GM12878 (cell line): ENCODE measurements at regions of chr17 and their contacts with region 1.

Region 1: GRCh38 chr17:57892146-57892828 is 42.4 kb upstream of the MRPS23 start:
- DNase-seq: no peak
- ATAC-seq: peak; percentile 91
- H3K4me3 ChIP-seq: no peak overlapping the region
- H3K27ac ChIP-seq: no peak overlapping the region
- H3K4me1 ChIP-seq: peaks cover 19% of the 10 kb centered on the region
- H3K27me3 ChIP-seq: no peaks in the 10 kb centered on the region
- CTCF ChIP-seq: peak; percentile 91 to 99 (median 99)
- EP300 ChIP-seq: no peak
- POLR2A ChIP-seq: no peak
- RAD21 ChIP-seq: peak; percentile 88

Region 2: GRCh38 chr17:57855391-57856035 is 36.8 kb before region 1 on chr17:
- CTCF ChIA-PET with region 1: interaction called, 47 read pairs
- POLR2A ChIA-PET with region 1: no interaction called
- RAD21 ChIA-PET with region 1: interaction called, 11 read pairs
- SMC1A ChIA-PET with region 1: interaction called, 7 read pairs
- in situ Hi-C with region 1: no loop called
- intact Hi-C with region 1: loop called (anchors 5 kb)
- DNase-seq: no peak
- ATAC-seq: no peak
- H3K4me3 ChIP-seq: no peak overlapping the region
- H3K27ac ChIP-seq: no peak overlapping the region
- H3K4me1 ChIP-seq: no peaks in the 10 kb centered on the region
- H3K27me3 ChIP-seq: no peaks in the 10 kb centered on the region; a peak in 1 of 4 replicates
- CTCF ChIP-seq: no peak
- EP300 ChIP-seq: no peak
- POLR2A ChIP-seq: no peak
- RAD21 ChIP-seq: no peak

Region 3: DNA sequence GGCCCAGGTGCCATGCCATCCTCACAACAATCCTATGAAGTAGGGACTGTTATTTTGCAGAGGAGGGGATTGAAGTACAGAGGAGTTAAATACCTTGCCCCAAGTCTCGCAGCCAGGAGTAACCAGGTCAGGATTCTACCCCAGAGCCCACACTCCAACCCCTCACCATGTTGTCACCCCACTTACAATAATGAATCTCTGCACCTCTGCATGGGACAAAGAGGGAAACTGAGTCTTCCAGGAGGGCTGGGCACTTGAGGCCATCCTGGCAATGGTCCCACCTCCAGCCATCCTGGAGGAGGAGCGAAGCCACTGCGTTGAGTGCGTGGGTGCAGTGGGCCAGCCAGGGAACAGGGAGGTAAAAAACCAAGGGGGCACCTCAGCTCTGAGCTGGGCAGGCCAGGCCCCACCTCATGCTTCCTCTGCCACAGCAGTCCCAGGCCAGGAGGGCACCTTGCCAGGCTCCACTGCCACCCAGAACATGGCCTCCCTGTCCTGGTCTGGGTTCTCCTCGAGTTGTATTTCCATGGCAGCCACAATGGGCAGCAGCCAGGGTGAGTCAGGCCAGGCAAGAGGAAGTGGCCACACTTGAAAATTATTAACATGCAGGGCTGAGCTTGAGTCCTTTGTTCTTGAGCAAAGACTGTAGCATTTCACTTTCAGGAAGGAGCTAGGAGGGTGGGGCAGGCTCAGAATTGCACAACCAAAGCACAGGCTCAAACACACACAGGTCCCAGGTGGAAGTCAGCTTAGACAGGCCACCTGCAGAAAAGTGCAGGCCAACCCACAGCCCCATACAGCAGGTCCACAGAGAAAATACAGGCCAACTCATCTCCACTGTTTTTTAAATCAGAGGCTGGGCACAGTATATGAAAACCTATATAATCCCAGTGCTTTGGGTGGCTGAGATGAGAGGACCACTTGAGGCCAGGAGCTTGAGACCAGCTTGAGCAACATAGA is 10.8 kb after region 1 on chr17:
- CTCF ChIA-PET with region 1: interaction called, 27 read pairs
- POLR2A ChIA-PET with region 1: interaction called, 4 read pairs
- RAD21 ChIA-PET with region 1: interaction called, 14 read pairs
- SMC1A ChIA-PET with region 1: interaction called, 5 read pairs
- in situ Hi-C with region 1: no loop called
- intact Hi-C with region 1: no loop called
- DNase-seq: peak; percentile 89
- ATAC-seq: peak; percentile 82
- H3K4me3 ChIP-seq: peak overlapping the region; percentile 35; the same call in 1 of the 2 replicates
- H3K27ac ChIP-seq: peak overlapping the region; percentile 85
- H3K4me1 ChIP-seq: peaks cover 58% of the 10 kb centered on the region
- H3K27me3 ChIP-seq: no peaks in the 10 kb centered on the region
- CTCF ChIP-seq: no peak
- EP300 ChIP-seq: peak; percentile 53 to 77; a peak in 3 of 4 replicates
- POLR2A ChIP-seq: 0 out of 2 replicates have a peak, but pooled peaks have one; percentile 27
- RAD21 ChIP-seq: peak; percentile 26; the same call in 1 of the 2 replicates

Region 4: GRCh38 chr17:57946798-57947358 is 54.6 kb after region 1 on chr17:
- CTCF ChIA-PET with region 1: interaction called, 18 read pairs
- POLR2A ChIA-PET with region 1: no interaction called
- RAD21 ChIA-PET with region 1: interaction called, 10 read pairs
- SMC1A ChIA-PET with region 1: interaction called, 12 read pairs
- in situ Hi-C with region 1: no loop called
- intact Hi-C with region 1: no loop called
- DNase-seq: peak; percentile 73
- ATAC-seq: peak; percentile 90
- H3K4me3 ChIP-seq: peak overlapping the region; percentile 28; the same call in 1 of the 2 replicates
- H3K27ac ChIP-seq: no peak overlapping the region
- H3K4me1 ChIP-seq: peaks cover 54% of the 10 kb centered on the region
- H3K27me3 ChIP-seq: no peaks in the 10 kb centered on the region
- CTCF ChIP-seq: no peak
- EP300 ChIP-seq: no peak
- POLR2A ChIP-seq: no peak
- RAD21 ChIP-seq: no peak

Region 5: GRCh38 chr17:57982452-57983170 is 90.3 kb after region 1 on chr17:
- CTCF ChIA-PET with region 1: interaction called, 21 read pairs
- POLR2A ChIA-PET with region 1: no interaction called
- RAD21 ChIA-PET with region 1: interaction called, 13 read pairs
- SMC1A ChIA-PET with region 1: interaction called, 27 read pairs
- in situ Hi-C with region 1: no loop called
- intact Hi-C with region 1: no loop called
- DNase-seq: no peak
- ATAC-seq: peak; percentile 13
- H3K4me3 ChIP-seq: 0 out of 2 replicates have a peak overlapping the region, but pooled peaks have one; percentile 5
- H3K27ac ChIP-seq: no peak overlapping the region
- H3K4me1 ChIP-seq: no peaks in the 10 kb centered on the region
- H3K27me3 ChIP-seq: no peaks in the 10 kb centered on the region
- CTCF ChIP-seq: no peak
- EP300 ChIP-seq: no peak
- POLR2A ChIP-seq: no peak
- RAD21 ChIP-seq: no peak